T-cell (primary cell): ENCODE measurements at regions of chr19 and their contacts with region 1.

Region 1: GRCh38 chr19:36573020-36573885 is at the start of gene ZNF529:
- DNase-seq: peak; percentile 71 to 93 (median 85)
- ATAC-seq: peak; percentile 89 to 94 (median 93)
- H3K4me3 ChIP-seq: peak within 1 kb of the TSS; percentile 94 to 96
- H3K4me3 Mint-ChIP-seq: peak within 1 kb of the TSS; percentile 84 to 96 (median 87)
- H3K27ac ChIP-seq: peak within 1 kb of the TSS; percentile 96
- H3K27ac Mint-ChIP-seq: peak within 1 kb of the TSS; percentile 93 to 96
- H3K4me1 ChIP-seq: peaks cover 13 to 20% of the 10 kb centered on the region in 2 experiments
- H3K4me1 Mint-ChIP-seq: peaks cover 38 to 48% (median 46%) of the 10 kb centered on the region in 3 donors
- H3K27me3 ChIP-seq: no peaks in the 10 kb centered on the region
- H3K27me3 Mint-ChIP-seq: no peaks in the 10 kb centered on the region
- total RNA-seq, gene ZNF529: 25.6 to 34.2 (median 30.8) TPM

Region 2: DNA sequence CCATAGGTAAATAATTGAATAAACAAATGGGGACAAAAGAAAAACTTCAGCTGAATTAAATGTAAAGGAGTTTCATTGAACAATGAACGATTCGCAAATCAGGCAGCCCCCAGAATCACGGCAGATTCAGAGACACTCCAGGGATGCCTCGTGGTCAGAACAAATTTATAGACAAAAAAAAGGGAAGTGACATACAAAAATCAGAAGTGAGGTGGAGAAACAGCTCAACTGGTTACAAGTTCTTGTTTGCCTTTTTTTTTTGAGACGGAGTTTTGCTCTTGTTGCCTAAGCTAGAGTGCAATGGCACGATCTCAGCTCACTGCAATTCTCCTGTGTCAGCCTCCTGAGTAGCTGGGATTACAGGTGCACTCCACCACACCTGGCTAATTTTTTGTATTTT is 89.6 kb before region 1 on chr19:
- CTCF ChIA-PET with region 1: no interaction called
- POLR2A ChIA-PET with region 1: no interaction called
- DNase-seq: no peak
- ATAC-seq: no peak
- H3K4me3 ChIP-seq: no peak overlapping the region
- H3K4me3 Mint-ChIP-seq: no peak overlapping the region
- H3K27ac ChIP-seq: no peak overlapping the region
- H3K27ac Mint-ChIP-seq: no peak overlapping the region
- H3K4me1 ChIP-seq: peaks cover 2 to 6% of the 10 kb centered on the region in 2 experiments
- H3K4me1 Mint-ChIP-seq: peaks cover 17 to 24% (median 22%) of the 10 kb centered on the region in 3 donors
- H3K27me3 ChIP-seq: no peaks in the 10 kb centered on the region
- H3K27me3 Mint-ChIP-seq: no peaks in the 10 kb centered on the region

Region 3: GRCh38 chr19:36605101-36605876 is 32.0 kb after region 1 on chr19 and contains the start of gene ZNF382:
- CTCF ChIA-PET with region 1: interaction called in 1 of 2 experiments, 4 read pairs
- POLR2A ChIA-PET with region 1: interaction called in 1 of 2 experiments, 10 read pairs
- DNase-seq: peak; percentile 68 to 89 (median 81)
- ATAC-seq: peak; percentile 79 to 86 (median 85)
- H3K4me3 ChIP-seq: peak within 1 kb of the TSS; percentile 85 to 98
- H3K4me3 Mint-ChIP-seq: peak within 1 kb of the TSS; percentile 85 to 94 (median 91)
- H3K27ac ChIP-seq: peak within 1 kb of the TSS; percentile 99
- H3K27ac Mint-ChIP-seq: peak within 1 kb of the TSS; percentile 95
- H3K4me1 ChIP-seq: peaks cover 9 to 16% of the 10 kb centered on the region in 2 experiments
- H3K4me1 Mint-ChIP-seq: peaks cover 27 to 30% (median 30%) of the 10 kb centered on the region in 3 donors
- H3K27me3 ChIP-seq: no peaks in the 10 kb centered on the region
- H3K27me3 Mint-ChIP-seq: no peaks in the 10 kb centered on the region
- total RNA-seq, gene ZNF382: 10.4 to 21.8 (median 18.6) TPM

Region 4: DNA sequence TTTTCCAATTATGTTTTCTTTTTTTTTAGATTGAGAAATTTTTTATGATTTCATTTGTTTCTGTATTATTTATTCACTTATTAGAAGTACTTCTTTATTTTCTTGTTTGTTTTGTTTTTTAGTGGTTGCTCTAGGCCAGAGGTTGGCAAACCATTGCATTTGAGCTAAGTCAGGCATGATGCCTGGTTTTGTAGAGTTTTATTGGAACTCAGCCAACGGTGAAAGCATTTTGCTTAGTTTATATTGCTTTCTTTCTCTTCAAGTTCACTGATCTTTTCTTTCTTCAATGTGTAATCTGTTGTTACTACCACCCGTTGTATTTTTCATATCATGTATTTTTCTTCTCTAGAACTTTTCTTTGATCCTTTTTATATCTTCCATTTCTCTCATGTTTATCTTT is 133.9 kb after region 1 on chr19:
- CTCF ChIA-PET with region 1: no interaction called
- POLR2A ChIA-PET with region 1: no interaction called
- DNase-seq: no peak
- ATAC-seq: no peak
- H3K4me3 ChIP-seq: no peak overlapping the region
- H3K4me3 Mint-ChIP-seq: no peak overlapping the region
- H3K27ac ChIP-seq: no peak overlapping the region
- H3K27ac Mint-ChIP-seq: no peak overlapping the region
- H3K4me1 ChIP-seq: no peaks in the 10 kb centered on the region
- H3K4me1 Mint-ChIP-seq: no peaks in the 10 kb centered on the region
- H3K27me3 ChIP-seq: no peaks in the 10 kb centered on the region
- H3K27me3 Mint-ChIP-seq: no peaks in the 10 kb centered on the region